Activated T-helper 1 cell treated with anti-CD3 and anti-CD28 coated beads, Interleukin-12 subunit alpha, Interleukin-12 subunit beta, Interleukin-2, Interleukin-4 antibody, amounts not matched to agents 30 ng/mL and 10 ng/mL and 1 ng/mL, durations not matched to agents 14 hours and 24 hours and 36 hours (primary cell): ENCODE measurements at regions of chr12 and their contacts with region 1.

Region 1: DNA sequence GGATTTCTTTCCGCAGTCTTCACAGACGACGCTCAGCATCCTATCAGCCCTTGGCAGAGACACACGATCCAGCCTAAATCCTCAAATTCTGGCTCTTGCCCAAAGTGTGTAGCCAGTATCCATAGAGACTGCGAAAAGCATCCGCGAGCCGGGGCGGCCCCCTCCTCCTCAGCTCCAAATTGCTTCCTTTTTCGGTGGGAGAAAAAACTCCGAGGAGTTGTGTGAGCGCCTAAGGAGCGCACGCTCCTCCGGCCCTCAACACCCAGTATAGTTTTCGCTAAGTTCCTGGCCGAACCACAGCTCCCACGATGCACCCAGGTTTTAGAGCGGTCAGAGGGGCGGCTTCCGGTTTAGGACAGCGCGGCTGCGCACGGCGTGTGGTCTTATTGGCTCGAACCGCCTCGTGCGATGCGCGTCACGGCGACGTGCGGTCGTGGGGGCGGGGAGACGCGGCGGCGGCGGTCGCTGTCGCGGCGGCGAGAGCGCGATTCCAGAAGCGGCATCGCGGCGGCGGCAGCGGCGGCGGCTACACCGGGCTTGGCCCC is at the start of gene ADIPOR2:
- DNase-seq: peak; percentile 93
- H3K4me3 Mint-ChIP-seq: peak within 1 kb of the TSS; percentile 99
- H3K27ac Mint-ChIP-seq: peak within 1 kb of the TSS; percentile 96
- H3K4me1 Mint-ChIP-seq: peaks cover 50% of the 10 kb centered on the region
- H3K27me3 Mint-ChIP-seq: peaks cover 3% of the 10 kb centered on the region
- total RNA-seq, gene ADIPOR2: 69.4 and 75.2 TPM in 2 replicates

Region 2: GRCh38 chr12:1661553-1662335 is 28.9 kb before region 1 on chr12:
- intact Hi-C with region 1: loop called (anchors 1 kb)
- DNase-seq: peak; percentile 79
- H3K4me3 Mint-ChIP-seq: peak overlapping the region; percentile 79
- H3K27ac Mint-ChIP-seq: peak overlapping the region; percentile 53
- H3K4me1 Mint-ChIP-seq: peaks cover 21% of the 10 kb centered on the region
- H3K27me3 Mint-ChIP-seq: peaks cover 2% of the 10 kb centered on the region

Region 3: DNA sequence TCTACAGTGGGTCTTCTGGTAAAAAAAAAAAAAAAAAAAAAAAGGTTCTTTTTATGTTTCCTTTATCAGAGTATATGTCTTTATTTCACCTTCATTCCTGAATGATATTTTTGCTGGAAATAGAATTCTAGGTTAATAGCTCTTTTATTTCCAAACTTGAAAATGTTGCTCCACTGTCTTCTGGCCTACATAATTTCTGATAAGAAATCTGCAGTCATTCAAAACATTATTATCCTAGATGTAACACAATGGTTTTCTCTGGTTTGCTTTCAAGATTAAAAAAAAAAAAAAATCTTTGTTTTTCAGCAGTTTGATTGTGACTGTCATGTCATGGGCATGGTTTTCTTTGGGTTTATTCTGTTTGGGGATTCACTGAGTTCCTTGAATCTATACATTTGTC is 294.1 kb after region 1 on chr12:
- intact Hi-C with region 1: no loop called
- DNase-seq: no peak
- H3K4me3 Mint-ChIP-seq: no peak overlapping the region
- H3K27ac Mint-ChIP-seq: no peak overlapping the region
- H3K4me1 Mint-ChIP-seq: no peaks in the 10 kb centered on the region
- H3K27me3 Mint-ChIP-seq: no peaks in the 10 kb centered on the region